BJ (cell line): ENCODE measurements at regions of chr13 and their contacts with region 1.

Region 1: GRCh38 chr13:98672944-98673545 is 79.4 kb downstream of the SLC15A1 start:
- DNase-seq: no peak
- H3K4me3 ChIP-seq: no peak overlapping the region
- H3K27me3 ChIP-seq: peaks cover 2% of the 10 kb centered on the region; the same call in 1 of the 2 replicates
- CTCF ChIP-seq: peak; percentile 81

Region 2: GRCh38 chr13:98026457-98026857 is 646.6 kb before region 1 on chr13:
- CTCF ChIA-PET with region 1: no interaction called
- POLR2A ChIA-PET with region 1: no interaction called
- DNase-seq: no peak
- H3K4me3 ChIP-seq: no peak overlapping the region
- H3K27me3 ChIP-seq: no peaks in the 10 kb centered on the region
- CTCF ChIP-seq: no peak

Region 3: GRCh38 chr13:98445340-98446233 is 227.5 kb before region 1 on chr13:
- CTCF ChIA-PET with region 1: interaction called, 27 read pairs
- POLR2A ChIA-PET with region 1: no interaction called
- DNase-seq: no peak
- H3K4me3 ChIP-seq: no peak overlapping the region
- H3K27me3 ChIP-seq: no peaks in the 10 kb centered on the region
- CTCF ChIP-seq: peak; percentile 99

Region 4: DNA sequence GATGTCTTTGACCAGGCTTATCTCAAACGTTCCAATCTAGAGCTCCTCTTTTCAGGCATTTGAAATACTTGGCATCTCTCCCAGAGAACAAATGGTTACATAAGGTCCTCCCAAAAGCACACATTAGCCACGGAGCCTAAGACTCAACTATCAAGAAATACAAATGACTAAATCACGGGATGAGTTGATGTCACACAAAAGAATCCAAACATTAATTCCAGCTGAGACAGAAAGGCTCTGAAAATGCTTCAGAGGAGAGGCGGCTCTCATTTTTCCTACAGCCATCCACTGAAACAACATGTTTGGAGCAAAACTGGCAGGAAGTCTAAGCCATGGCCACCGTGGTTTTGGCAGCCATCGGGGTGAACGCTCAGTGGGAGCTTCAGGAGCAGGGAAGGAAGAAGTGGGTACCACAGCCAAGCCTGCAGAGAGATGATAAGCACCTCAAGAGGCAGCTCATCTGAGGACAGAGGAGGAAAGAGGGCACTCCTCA is 218.6 kb before region 1 on chr13:
- CTCF ChIA-PET with region 1: interaction called, 12 read pairs
- POLR2A ChIA-PET with region 1: no interaction called
- DNase-seq: peak; percentile 87
- H3K4me3 ChIP-seq: no peak overlapping the region
- H3K27me3 ChIP-seq: no peaks in the 10 kb centered on the region
- CTCF ChIP-seq: no peak